Activated CD4-positive, alpha-beta T cell treated with anti-CD3 and anti-CD28 coated beads, Interleukin-2, amount 10 ng/mL, durations not matched to agents 24 days and 14 days (primary cell): ENCODE measurements at regions of chr12 and their contacts with region 1.

Region 1: GRCh38 chr12:92928962-92929915 is at the start of gene EEA1:
- DNase-seq: peak; percentile 98
- H3K4me3 Mint-ChIP-seq: peak within 1 kb of the TSS; percentile 89
- H3K27ac Mint-ChIP-seq: peak within 1 kb of the TSS; percentile 96
- H3K4me1 Mint-ChIP-seq: peaks cover 27% of the 10 kb centered on the region
- H3K27me3 Mint-ChIP-seq: peaks cover 6% of the 10 kb centered on the region
- total RNA-seq, gene EEA1: 22.2 and 23.4 TPM in 2 replicates

Region 2: DNA sequence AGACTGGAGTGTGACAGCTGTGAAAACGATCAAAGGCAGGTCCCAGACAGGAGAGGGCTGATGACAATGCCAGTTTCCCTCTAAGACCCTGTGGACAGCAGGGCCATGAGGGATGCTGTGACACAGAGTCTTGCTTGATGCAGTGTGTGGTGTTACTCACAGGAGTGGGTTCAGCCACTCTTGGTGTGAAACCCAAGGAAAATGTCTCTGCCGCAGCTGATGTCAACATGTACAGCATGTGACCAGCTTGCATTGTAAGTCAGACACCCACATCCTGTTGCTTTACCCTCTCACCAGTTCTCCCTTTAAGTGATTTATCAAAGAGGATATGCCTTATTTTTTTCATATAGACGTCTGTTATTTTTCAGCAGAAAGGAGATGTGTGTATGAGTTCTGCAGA is 1052.2 kb before region 1 on chr12:
- intact Hi-C with region 1: loop called (anchors 5 kb)
- DNase-seq: peak; percentile 95
- H3K4me3 Mint-ChIP-seq: peak overlapping the region; percentile 80
- H3K27ac Mint-ChIP-seq: peak overlapping the region; percentile 97
- H3K4me1 Mint-ChIP-seq: peaks cover 46% of the 10 kb centered on the region
- H3K27me3 Mint-ChIP-seq: no peaks in the 10 kb centered on the region

Region 3: GRCh38 chr12:92593734-92594402 is 335.4 kb before region 1 on chr12:
- intact Hi-C with region 1: loop called (anchors 5 kb)
- DNase-seq: peak; percentile 92
- H3K4me3 Mint-ChIP-seq: peak overlapping the region; percentile 71
- H3K27ac Mint-ChIP-seq: peak overlapping the region; percentile 99
- H3K4me1 Mint-ChIP-seq: peaks cover 57% of the 10 kb centered on the region
- H3K27me3 Mint-ChIP-seq: no peaks in the 10 kb centered on the region

Region 4: DNA sequence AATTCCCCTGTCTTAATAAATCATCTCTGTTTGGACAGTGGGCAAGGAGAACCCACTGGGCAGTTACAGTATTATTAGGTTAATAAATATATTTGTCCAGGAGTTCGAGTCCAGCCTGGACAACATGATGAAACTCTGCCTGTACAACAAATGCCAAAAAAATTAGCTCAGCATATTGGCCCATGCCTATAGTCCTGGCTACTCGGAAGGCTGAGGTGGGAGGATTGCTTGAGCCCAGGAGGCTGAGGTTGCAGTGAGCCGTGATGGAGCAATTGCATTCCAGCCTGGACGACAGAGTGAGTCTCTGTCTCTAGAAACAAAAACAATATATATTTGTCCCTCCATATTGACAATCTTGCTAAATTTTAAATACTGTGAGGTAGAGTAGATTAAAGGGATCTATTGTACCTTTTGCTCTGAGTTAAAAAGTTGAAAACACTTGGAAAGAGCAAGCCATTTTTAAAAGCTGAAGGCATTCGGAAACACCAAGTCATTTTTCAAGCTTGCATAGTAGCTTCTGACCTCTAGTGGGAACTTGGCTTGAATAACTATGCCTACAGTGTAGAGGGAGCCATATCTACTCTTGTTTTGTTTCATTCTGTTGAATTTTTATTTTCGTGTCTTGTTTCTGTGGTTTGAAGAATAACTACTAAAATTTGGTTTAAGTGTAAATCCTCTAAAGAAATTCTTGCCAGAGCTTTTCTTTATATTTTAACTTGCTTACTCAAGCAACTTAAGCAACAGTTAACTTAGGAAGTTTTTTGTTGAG is 14.4 kb after region 1 on chr12:
- intact Hi-C with region 1: no loop called
- DNase-seq: no peak
- H3K4me3 Mint-ChIP-seq: no peak overlapping the region
- H3K27ac Mint-ChIP-seq: no peak overlapping the region
- H3K4me1 Mint-ChIP-seq: peaks cover 3% of the 10 kb centered on the region
- H3K27me3 Mint-ChIP-seq: peaks cover 4% of the 10 kb centered on the region

Region 5: DNA sequence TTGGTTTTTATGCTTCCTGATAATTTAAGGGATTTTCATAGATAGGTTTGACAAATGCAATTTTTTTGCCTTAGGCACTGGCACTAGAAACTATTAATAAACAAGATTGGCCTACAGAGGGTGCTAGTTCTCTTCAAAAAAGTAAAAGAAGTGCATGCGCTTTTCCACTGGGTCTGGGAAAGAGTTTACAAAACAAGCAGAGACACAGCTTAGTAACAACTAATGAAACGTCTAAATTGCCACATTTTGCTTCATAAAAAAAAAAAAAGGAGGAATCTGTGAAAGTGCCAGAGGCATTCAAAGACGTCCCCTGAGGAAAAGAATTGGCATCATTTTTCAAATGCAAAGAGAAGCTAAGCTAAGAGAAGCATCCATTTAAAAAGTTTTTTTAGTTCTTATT is 58.1 kb after region 1 on chr12:
- intact Hi-C with region 1: loop called (anchors 1 kb)
- DNase-seq: peak; percentile 77
- H3K4me3 Mint-ChIP-seq: peak overlapping the region; percentile 18
- H3K27ac Mint-ChIP-seq: peak overlapping the region; percentile 66
- H3K4me1 Mint-ChIP-seq: peaks cover 22% of the 10 kb centered on the region
- H3K27me3 Mint-ChIP-seq: peaks cover 3% of the 10 kb centered on the region

Region 6: DNA sequence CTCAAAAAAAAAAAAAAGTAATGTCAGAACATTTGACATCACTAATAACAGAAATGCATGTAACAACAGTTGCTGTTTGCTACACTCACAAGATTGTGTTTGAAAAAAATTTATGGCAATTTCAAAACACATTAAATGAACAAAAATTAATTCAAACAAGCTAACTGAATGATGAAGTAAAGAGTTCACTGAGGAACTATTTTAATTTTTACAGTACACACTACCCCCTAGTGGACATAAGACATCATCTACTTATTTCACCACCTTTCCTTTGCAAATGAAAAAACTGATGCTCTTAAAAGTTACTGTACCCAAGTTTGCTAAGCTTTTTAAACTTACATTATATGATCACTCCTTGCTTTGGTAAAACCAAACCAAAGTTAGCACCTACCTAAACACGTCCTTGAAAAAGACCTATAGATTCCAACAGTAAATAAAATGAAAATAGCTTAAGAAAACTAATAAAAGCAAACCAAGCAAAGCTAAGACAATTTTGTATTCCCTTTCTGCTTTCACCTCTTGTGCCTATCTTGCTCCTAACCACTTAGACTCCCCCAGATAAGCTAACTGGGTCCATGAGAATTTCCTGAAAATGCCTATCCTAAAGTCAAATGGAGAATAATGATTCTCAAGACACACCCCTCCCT is 490.3 kb after region 1 on chr12:
- intact Hi-C with region 1: loop called (anchors 5 kb)
- DNase-seq: peak; percentile 52
- H3K4me3 Mint-ChIP-seq: no peak overlapping the region
- H3K27ac Mint-ChIP-seq: peak overlapping the region; percentile 41
- H3K4me1 Mint-ChIP-seq: peaks cover 62% of the 10 kb centered on the region
- H3K27me3 Mint-ChIP-seq: no peaks in the 10 kb centered on the region

Region 7: GRCh38 chr12:93785262-93786010 is 856.2 kb after region 1 on chr12:
- intact Hi-C with region 1: loop called (anchors 5 kb)
- DNase-seq: peak; percentile 84
- H3K4me3 Mint-ChIP-seq: peak overlapping the region; percentile 39
- H3K27ac Mint-ChIP-seq: peak overlapping the region; percentile 88
- H3K4me1 Mint-ChIP-seq: peaks cover 53% of the 10 kb centered on the region
- H3K27me3 Mint-ChIP-seq: no peaks in the 10 kb centered on the region